ENCODE measurements at regions of chr19 and their contacts with region 1.

Region 1: GRCh38 chr19:16185123-16185767 is at the start of gene FAM32A:
- DNase-seq: peak; percentile 99

Region 2: GRCh38 chr19:16041299-16041990 is 143.8 kb before region 1 on chr19:
- CTCF ChIA-PET with region 1: interaction called, 5 read pairs
- POLR2A ChIA-PET with region 1: interaction called, 17 read pairs
- DNase-seq: peak; percentile 89

Region 3: GRCh38 chr19:16197622-16198369 is 12.6 kb after region 1 on chr19 and contains the start of gene AP1M1:
- CTCF ChIA-PET with region 1: interaction called, 6 read pairs
- POLR2A ChIA-PET with region 1: interaction called, 16 read pairs
- DNase-seq: peak; percentile 98

Measured in HEK293T (cell line).